Right ventricle myocardium superior (tissue), 1 donor: ENCODE measurements at regions of chr14 and their contacts with region 1.

Region 1: GRCh38 chr14:59428581-59429012 is 36.6 kb downstream of the GPR135 start:
- DNase-seq: no peak
- ATAC-seq: no peak

Region 2: DNA sequence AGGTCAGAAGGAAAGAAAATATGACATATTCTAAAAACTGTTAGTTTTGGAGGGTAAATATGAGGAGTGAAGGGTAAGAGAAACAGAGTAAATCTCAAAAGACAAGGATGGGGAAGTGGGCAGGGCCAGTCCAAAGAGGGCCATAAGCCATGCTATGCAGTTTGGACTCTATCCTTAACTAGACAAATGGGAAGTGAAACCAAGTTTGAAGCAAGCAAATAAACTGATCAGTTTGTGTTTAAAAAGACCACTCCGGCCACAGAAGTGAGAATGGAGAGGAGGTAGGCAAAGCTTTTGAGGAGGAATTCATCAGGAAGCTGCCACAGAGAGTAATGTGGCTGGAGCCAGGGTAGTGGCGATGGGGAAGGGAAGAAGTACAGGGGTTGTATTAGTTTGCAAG is 277.6 kb before region 1 on chr14:
- intact Hi-C with region 1: no loop called
- DNase-seq: no peak
- ATAC-seq: peak; percentile 51

Region 3: GRCh38 chr14:59333668-59334067 is 94.9 kb before region 1 on chr14:
- intact Hi-C with region 1: loop called (anchors 10 kb)
- DNase-seq: no peak
- ATAC-seq: peak; percentile 90

Region 4: DNA sequence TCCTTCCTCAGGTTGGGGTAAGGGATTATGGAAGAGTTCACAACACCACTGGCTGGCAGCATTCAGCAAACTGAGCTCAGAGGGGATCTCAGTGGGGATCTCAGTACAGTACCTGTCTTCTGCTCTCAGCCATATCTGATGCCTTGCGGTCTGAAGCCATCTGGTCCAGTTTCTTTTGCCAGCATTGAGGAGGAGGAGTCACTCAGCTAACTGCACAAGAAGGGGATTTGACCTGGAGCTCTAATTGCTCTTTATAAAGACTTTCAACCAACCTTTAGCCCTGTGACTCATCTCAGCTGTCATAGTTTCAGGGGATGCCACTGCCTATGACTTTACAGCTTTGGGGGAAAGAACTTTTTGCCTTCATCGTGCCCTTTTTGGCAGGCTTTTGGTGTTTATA is 100.6 kb after region 1 on chr14:
- intact Hi-C with region 1: no loop called
- DNase-seq: no peak
- ATAC-seq: no peak